GM12878 (cell line): ENCODE measurements at regions of chr4 and their contacts with region 1.

Region 1: DNA sequence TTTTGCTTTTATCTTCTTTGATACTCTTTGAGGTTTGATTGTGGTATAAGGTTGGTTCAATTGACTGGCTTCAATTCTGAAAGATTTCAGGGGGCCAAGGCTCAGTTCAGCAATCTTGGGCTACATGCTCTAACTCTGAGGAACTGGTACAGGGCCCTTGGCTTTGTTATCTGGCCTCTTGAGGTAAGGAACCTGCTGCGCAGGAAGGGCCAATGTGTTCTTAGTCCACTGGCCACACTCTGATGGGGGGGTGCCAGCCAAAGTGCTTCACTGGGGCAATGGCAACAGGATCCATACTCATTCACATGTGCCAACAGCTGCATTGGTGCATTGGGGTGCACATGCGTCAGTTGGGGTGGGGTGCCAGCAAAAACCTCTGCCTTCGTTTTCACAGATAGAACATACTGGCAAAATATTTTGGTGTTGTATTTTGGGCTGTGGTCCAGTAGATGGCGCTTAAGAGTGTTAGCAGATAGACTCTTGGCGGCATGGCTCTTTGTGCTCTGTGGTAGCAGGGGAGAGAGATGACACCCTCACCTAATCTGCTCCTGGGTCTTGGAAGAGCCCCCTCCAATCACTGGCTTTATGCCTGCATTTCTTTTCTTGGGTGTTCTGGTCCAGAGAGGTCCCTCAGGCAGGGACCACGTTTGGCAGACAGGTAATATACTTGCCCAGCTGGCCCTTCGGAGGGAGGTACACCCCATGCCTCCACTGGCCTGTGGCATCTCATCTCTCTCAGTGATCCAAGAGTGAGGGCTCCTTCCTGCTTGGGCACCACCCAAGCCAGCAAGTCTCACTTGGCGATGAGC is 42.9 kb downstream of the NDST3 start:
- DNase-seq: no peak
- ATAC-seq: peak; percentile 92
- H3K4me3 ChIP-seq: no peak overlapping the region
- H3K27ac ChIP-seq: no peak overlapping the region
- H3K4me1 ChIP-seq: no peaks in the 10 kb centered on the region
- H3K27me3 ChIP-seq: no peaks in the 10 kb centered on the region
- CTCF ChIP-seq: peak; percentile 52 to 63 (median 62)
- EP300 ChIP-seq: no peak
- POLR2A ChIP-seq: no peak
- RAD21 ChIP-seq: peak; percentile 54

Region 2: GRCh38 chr4:117654079-117654478 is 423.1 kb before region 1 on chr4:
- CTCF ChIA-PET with region 1: no interaction called
- POLR2A ChIA-PET with region 1: no interaction called
- RAD21 ChIA-PET with region 1: no interaction called
- SMC1A ChIA-PET with region 1: no interaction called
- in situ Hi-C with region 1: no loop called
- intact Hi-C with region 1: no loop called
- DNase-seq: no peak
- ATAC-seq: no peak
- H3K4me3 ChIP-seq: no peak overlapping the region
- H3K27ac ChIP-seq: no peak overlapping the region
- H3K4me1 ChIP-seq: no peaks in the 10 kb centered on the region
- H3K27me3 ChIP-seq: no peaks in the 10 kb centered on the region
- CTCF ChIP-seq: no peak
- EP300 ChIP-seq: no peak
- POLR2A ChIP-seq: no peak
- RAD21 ChIP-seq: no peak

Region 3: DNA sequence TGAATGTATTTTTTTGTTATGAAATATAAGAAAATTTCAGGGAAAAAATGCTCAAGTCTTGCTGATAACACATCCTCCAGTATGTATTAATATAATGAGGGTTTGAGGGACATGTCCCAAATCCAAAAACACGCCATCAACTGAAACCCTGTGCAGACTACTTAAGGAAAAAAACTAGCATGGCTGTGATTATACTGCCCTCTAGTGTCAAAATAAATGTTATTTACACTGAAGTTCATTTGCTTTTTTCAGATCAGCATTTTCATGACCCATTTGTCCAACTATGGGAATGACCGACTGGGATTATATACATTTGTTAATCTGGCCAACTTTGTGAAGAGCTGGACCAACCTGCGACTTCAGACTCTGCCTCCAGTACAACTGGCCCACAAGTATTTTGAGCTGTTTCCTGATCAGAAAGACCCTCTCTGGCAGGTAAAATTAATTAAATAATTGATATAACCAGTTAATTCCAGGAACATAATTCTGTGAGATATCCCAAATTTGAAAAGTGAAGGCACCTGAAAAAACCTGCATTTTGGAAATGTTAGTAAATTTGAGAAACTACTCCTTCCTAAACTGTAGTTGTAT is 147.2 kb after region 1 on chr4:
- CTCF ChIA-PET with region 1: interaction called, 9 read pairs
- POLR2A ChIA-PET with region 1: no interaction called
- RAD21 ChIA-PET with region 1: no interaction called
- SMC1A ChIA-PET with region 1: no interaction called
- in situ Hi-C with region 1: loop called (anchors 10 kb)
- intact Hi-C with region 1: loop called (anchors 1 kb)
- DNase-seq: no peak
- ATAC-seq: peak; percentile 71
- H3K4me3 ChIP-seq: no peak overlapping the region
- H3K27ac ChIP-seq: no peak overlapping the region
- H3K4me1 ChIP-seq: no peaks in the 10 kb centered on the region
- H3K27me3 ChIP-seq: no peaks in the 10 kb centered on the region; a peak in 1 of 4 replicates
- CTCF ChIP-seq: peak; percentile 35 to 69 (median 50); a peak in 4 of 6 replicates
- EP300 ChIP-seq: no peak
- POLR2A ChIP-seq: no peak
- RAD21 ChIP-seq: peak; percentile 69

Region 4: GRCh38 chr4:118260309-118260708 is 183.1 kb after region 1 on chr4:
- CTCF ChIA-PET with region 1: no interaction called
- POLR2A ChIA-PET with region 1: no interaction called
- RAD21 ChIA-PET with region 1: no interaction called
- SMC1A ChIA-PET with region 1: no interaction called
- in situ Hi-C with region 1: no loop called
- intact Hi-C with region 1: no loop called
- DNase-seq: no peak
- ATAC-seq: no peak
- H3K4me3 ChIP-seq: no peak overlapping the region
- H3K27ac ChIP-seq: no peak overlapping the region
- H3K4me1 ChIP-seq: no peaks in the 10 kb centered on the region
- H3K27me3 ChIP-seq: no peaks in the 10 kb centered on the region; a peak in 2 of 4 replicates
- CTCF ChIP-seq: no peak
- EP300 ChIP-seq: no peak
- POLR2A ChIP-seq: no peak
- RAD21 ChIP-seq: no peak

Region 5: DNA sequence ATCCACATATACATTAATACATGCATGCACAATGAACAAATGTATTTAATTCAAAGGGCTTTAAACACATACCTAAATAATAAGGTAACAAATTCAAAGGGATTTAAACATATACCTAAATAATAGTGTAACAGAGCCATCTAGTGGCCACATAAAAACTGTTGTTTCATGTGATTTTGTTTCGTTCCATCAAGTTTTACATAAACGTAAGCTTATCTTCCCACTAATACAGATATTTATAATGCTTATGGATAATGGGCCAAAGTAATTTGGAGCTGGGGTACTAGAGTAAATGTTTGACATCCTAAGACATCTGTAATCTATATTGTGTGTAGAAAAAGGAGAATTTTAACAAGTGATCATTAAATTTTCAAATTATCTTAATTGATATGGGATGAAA is 193.3 kb after region 1 on chr4:
- CTCF ChIA-PET with region 1: interaction called, 12 read pairs
- POLR2A ChIA-PET with region 1: no interaction called
- RAD21 ChIA-PET with region 1: no interaction called
- SMC1A ChIA-PET with region 1: interaction called, 3 read pairs
- in situ Hi-C with region 1: loop called (anchors 5 kb)
- intact Hi-C with region 1: loop called (anchors 1 kb)
- DNase-seq: no peak
- ATAC-seq: peak; percentile 73
- H3K4me3 ChIP-seq: no peak overlapping the region
- H3K27ac ChIP-seq: no peak overlapping the region
- H3K4me1 ChIP-seq: no peaks in the 10 kb centered on the region
- H3K27me3 ChIP-seq: no peaks in the 10 kb centered on the region
- CTCF ChIP-seq: peak; percentile 30 to 61 (median 59); a peak in 4 of 6 replicates
- EP300 ChIP-seq: no peak
- POLR2A ChIP-seq: no peak
- RAD21 ChIP-seq: peak; percentile 55